Common myeloid progenitor, CD34-positive (primary cell): ENCODE measurements at regions of chr10 and their contacts with region 1.

Region 1: DNA sequence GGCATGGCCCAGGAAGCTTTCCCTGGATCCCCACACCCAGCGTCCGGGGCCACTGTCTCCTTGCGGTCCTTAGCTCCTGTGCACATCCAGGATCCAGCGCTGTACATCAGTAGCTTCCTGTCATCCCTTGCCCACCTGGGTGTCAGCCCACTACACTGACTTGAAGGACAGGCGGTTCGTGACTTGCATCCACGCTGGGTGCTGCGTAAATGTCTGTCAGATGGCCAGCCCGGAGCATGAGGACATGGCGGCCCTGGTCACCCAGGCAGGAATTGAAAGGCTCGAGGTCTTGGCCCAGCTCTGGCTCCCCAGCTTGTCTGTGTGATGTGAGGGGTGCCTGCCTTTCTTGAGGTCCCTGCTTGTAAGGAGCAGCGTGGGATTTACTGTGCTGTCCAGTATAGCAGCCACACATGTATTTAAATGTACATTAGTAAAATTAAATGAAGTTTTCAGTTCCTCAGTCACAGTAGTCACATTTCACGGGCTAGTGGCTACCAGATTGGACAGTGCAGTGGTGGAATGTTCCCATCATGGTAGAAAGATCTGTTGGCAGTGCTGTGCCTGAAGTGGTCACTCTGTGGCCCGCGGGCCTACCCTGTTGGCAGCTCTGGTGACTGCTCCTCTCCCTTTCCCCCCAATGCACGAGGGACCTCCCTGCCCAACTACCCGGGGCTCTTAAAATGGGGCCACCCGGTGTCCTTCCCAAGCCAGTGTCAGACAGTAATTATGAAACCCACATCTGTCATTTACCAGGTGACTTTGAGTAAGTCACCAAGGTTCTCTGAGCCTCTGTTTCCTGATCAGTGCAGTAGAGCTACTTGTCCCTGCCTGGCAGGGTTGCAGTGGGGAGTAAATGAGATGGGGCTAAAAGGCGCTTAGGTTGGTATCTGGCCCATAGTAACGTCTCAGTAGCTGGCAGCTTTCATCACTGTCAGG is 97.8 kb upstream of the PPIF start:
- DNase-seq: no peak
- H3K4me3 ChIP-seq: peak overlapping the region in 2 of 7 experiments; percentile 35 to 48
- H3K27ac ChIP-seq: peak overlapping the region; percentile 51 to 59
- H3K4me1 ChIP-seq: peaks cover 15 to 95% (median 62%) of the 10 kb centered on the region in 4 experiments
- H3K27me3 ChIP-seq: no peaks in the 10 kb centered on the region

Region 2: DNA sequence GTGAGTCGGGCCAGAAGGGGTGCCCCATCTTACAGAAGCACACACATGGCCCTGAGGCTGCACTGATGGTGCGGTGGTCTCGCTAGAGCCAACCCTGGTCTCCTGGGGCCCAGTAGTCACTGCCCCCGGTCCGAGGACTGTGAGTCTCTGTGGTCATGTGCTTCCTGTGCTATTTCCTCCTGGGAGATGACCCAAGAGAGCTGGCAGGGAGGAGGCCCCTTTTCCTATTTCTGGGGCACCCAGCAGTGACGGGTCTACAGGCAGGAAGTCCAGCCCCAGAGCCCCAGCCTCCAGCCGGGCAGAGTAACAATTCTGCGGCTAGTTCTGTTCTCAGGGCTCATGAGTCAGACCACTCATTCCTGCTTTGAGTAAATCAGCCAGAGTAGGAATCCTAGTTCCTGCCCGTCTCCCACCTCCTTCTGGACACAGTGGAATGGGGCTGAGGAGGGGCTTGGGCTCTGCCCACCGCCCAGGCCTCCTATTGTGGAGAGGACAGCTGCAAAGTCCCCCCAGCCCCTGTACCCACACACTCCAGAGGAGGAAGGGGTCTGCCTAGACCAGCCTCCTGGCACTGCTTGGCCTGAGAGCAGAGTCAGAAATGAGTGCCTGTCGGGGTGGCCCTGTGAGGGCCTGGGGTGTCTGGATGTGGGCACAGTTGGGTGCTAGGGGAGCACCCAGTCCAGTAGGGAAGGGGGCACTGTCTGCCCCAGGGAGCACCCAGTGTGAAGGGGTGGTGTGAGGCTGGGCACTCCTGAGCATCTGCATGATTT is 17.3 kb after region 1 on chr10:
- CTCF ChIA-PET with region 1: interaction called, 14 read pairs
- POLR2A ChIA-PET with region 1: interaction called, 5 read pairs
- DNase-seq: peak in 2 of 3 donors; percentile 65 to 76
- H3K4me3 ChIP-seq: peak overlapping the region in 2 of 7 experiments; percentile 2 to 45
- H3K27ac ChIP-seq: peak overlapping the region; percentile 62 to 74
- H3K4me1 ChIP-seq: peaks cover 11 to 96% (median 46%) of the 10 kb centered on the region in 4 experiments
- H3K27me3 ChIP-seq: no peaks in the 10 kb centered on the region